HepG2 (cell line): ENCODE measurements at regions of chr7 and their contacts with region 1.

Region 1: GRCh38 chr7:7290429-7291118 is 108.2 kb downstream of the C1GALT1 start:
- DNase-seq: no peak
- ATAC-seq: peak; percentile 38; the same call in 1 of the 3 replicates
- H3K4me3 ChIP-seq: no peak overlapping the region
- H3K27ac ChIP-seq: no peak overlapping the region
- H3K4me1 ChIP-seq: peaks cover 30% of the 10 kb centered on the region
- H3K27me3 ChIP-seq: peaks cover 0 to 4% of the 10 kb centered on the region in 2 experiments; a peak in 1 of 5 replicates
- CTCF ChIP-seq: peak; percentile 40
- EP300 ChIP-seq: no peak
- POLR2A ChIP-seq: no peak
- RAD21 ChIP-seq: no peak

Region 2: GRCh38 chr7:7201578-7202374 is 88.8 kb before region 1 on chr7:
- CTCF ChIA-PET with region 1: no interaction called
- POLR2A ChIA-PET with region 1: no interaction called
- in situ Hi-C with region 1: no loop called
- intact Hi-C with region 1: no loop called
- DNase-seq: no peak
- ATAC-seq: no peak
- H3K4me3 ChIP-seq: no peak overlapping the region
- H3K27ac ChIP-seq: no peak overlapping the region
- H3K4me1 ChIP-seq: peaks cover 62% of the 10 kb centered on the region
- H3K27me3 ChIP-seq: no peaks in the 10 kb centered on the region
- CTCF ChIP-seq: no peak
- EP300 ChIP-seq: no peak
- POLR2A ChIP-seq: no peak
- RAD21 ChIP-seq: no peak

Region 3: GRCh38 chr7:7274782-7275181 is 15.8 kb before region 1 on chr7:
- CTCF ChIA-PET with region 1: no interaction called
- POLR2A ChIA-PET with region 1: no interaction called
- in situ Hi-C with region 1: no loop called
- intact Hi-C with region 1: loop called (anchors 1 kb)
- DNase-seq: no peak
- ATAC-seq: no peak
- H3K4me3 ChIP-seq: no peak overlapping the region
- H3K27ac ChIP-seq: no peak overlapping the region
- H3K4me1 ChIP-seq: no peaks in the 10 kb centered on the region
- H3K27me3 ChIP-seq: no peaks in the 10 kb centered on the region
- CTCF ChIP-seq: no peak
- EP300 ChIP-seq: no peak
- POLR2A ChIP-seq: no peak
- RAD21 ChIP-seq: no peak